Heart left ventricle (tissue), 16 donors: ENCODE measurements at regions of chr7 and their contacts with region 1.

Region 1: GRCh38 chr7:147245292-147245691 is 1128.7 kb downstream of the CNTNAP2 start:
- DNase-seq: peak in 1 of 5 donors; percentile 8
- ATAC-seq: no peak
- H3K4me3 ChIP-seq: no peak overlapping the region
- H3K27ac ChIP-seq: no peak overlapping the region
- H3K4me1 ChIP-seq: no peaks in the 10 kb centered on the region
- H3K27me3 ChIP-seq: no peaks in the 10 kb centered on the region
- CTCF ChIP-seq: peak; percentile 38 to 69 (median 54)
- POLR2A ChIP-seq: no peak

Region 2: GRCh38 chr7:148084138-148084537 is 838.8 kb after region 1 on chr7:
- intact Hi-C with region 1: loop called in 7 of 10 experiments (anchors 2 to 10 kb)
- DNase-seq: peak in 3 of 5 donors; percentile 11 to 32 (median 27)
- ATAC-seq: peak in 1 of 4 donors; percentile 47
- H3K4me3 ChIP-seq: no peak overlapping the region
- H3K27ac ChIP-seq: no peak overlapping the region
- H3K4me1 ChIP-seq: no peaks in the 10 kb centered on the region
- H3K27me3 ChIP-seq: peaks cover 0 to 5% (median 0%) of the 10 kb centered on the region in 9 donors
- CTCF ChIP-seq: peak; percentile 47 to 67 (median 60)
- POLR2A ChIP-seq: no peak

Region 3: GRCh38 chr7:148095066-148095465 is 849.8 kb after region 1 on chr7:
- intact Hi-C with region 1: loop called in 1 of 10 experiments (anchors 10 kb)
- DNase-seq: no peak
- ATAC-seq: no peak
- H3K4me3 ChIP-seq: no peak overlapping the region
- H3K27ac ChIP-seq: no peak overlapping the region
- H3K4me1 ChIP-seq: peaks cover 0 to 4% (median 0%) of the 10 kb centered on the region in 12 donors
- H3K27me3 ChIP-seq: peaks cover 0 to 2% (median 0%) of the 10 kb centered on the region in 9 donors
- CTCF ChIP-seq: no peak
- POLR2A ChIP-seq: no peak

Region 4: GRCh38 chr7:148242294-148242801 is 997.1 kb after region 1 on chr7:
- intact Hi-C with region 1: loop called in 2 of 10 experiments (anchors 5 to 10 kb)
- DNase-seq: no peak
- ATAC-seq: peak; percentile 65 to 82 (median 74)
- H3K4me3 ChIP-seq: peak overlapping the region in 4 of 12 donors; percentile 3 to 32 (median 26)
- H3K27ac ChIP-seq: no peak overlapping the region
- H3K4me1 ChIP-seq: peaks cover 0 to 4% (median 0%) of the 10 kb centered on the region in 12 donors
- H3K27me3 ChIP-seq: peaks cover 0 to 49% (median 0%) of the 10 kb centered on the region in 9 donors
- CTCF ChIP-seq: peak; percentile 69 to 86 (median 78)
- POLR2A ChIP-seq: no peak

Region 5: GRCh38 chr7:148262721-148263229 is 1017.5 kb after region 1 on chr7:
- intact Hi-C with region 1: loop called in 6 of 10 experiments (anchors 5 to 10 kb)
- DNase-seq: peak; percentile 37 to 64 (median 49)
- ATAC-seq: peak; percentile 53 to 83 (median 78)
- H3K4me3 ChIP-seq: peak overlapping the region in 1 of 12 donors; percentile 13
- H3K27ac ChIP-seq: no peak overlapping the region
- H3K4me1 ChIP-seq: peaks cover 0 to 8% (median 0%) of the 10 kb centered on the region in 12 donors
- H3K27me3 ChIP-seq: peaks cover 0 to 14% (median 3%) of the 10 kb centered on the region in 9 donors
- CTCF ChIP-seq: peak; percentile 83 to 99 (median 93)
- POLR2A ChIP-seq: no peak